ENCODE measurements at regions of chrX and their contacts with region 1.

Region 1: GRCh38 chrX:85379174-85379895 is at the start of gene POF1B:
- DNase-seq: peak; percentile 65 to 74
- H3K4me3 ChIP-seq: peak within 1 kb of the TSS; percentile 68
- H3K4me3 Mint-ChIP-seq: peak within 1 kb of the TSS; percentile 97
- H3K27ac Mint-ChIP-seq: peak within 1 kb of the TSS; percentile 93
- H3K4me1 ChIP-seq: peaks cover 3% of the 10 kb centered on the region; the same call in 1 of the 2 replicates
- H3K4me1 Mint-ChIP-seq: peaks cover 7% of the 10 kb centered on the region
- H3K27me3 ChIP-seq: no peaks in the 10 kb centered on the region
- H3K27me3 Mint-ChIP-seq: no peaks in the 10 kb centered on the region
- CTCF ChIP-seq: no peak
- total RNA-seq, gene POF1B: 28.6 and 31.0 TPM in 2 replicates

Region 2: DNA sequence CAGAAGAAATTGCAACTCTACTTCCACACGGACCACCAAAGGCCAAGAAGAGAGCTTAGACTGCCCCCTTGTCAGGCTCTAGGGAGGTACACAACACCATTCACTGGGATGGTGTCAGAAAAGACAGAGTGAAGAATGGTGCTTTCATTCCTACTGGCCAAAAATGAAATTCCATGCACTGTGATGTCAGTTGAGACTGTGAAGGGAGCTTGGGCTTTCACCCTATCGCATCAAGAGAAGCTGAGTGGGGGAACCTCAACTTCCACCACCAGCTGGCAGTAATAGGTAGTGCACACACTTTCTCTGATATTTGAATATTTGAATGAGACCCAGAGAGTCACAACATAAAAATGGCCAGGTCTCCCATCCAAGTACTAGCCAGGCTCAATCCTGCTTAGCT is 69.6 kb before region 1 on chrX:
- CTCF ChIA-PET with region 1: no interaction called
- POLR2A ChIA-PET with region 1: no interaction called
- intact Hi-C with region 1: no loop called
- DNase-seq: peak in 1 of 2 experiments; percentile 3
- H3K4me3 ChIP-seq: no peak overlapping the region
- H3K4me3 Mint-ChIP-seq: no peak overlapping the region
- H3K27ac Mint-ChIP-seq: no peak overlapping the region
- H3K4me1 ChIP-seq: no peaks in the 10 kb centered on the region
- H3K4me1 Mint-ChIP-seq: no peaks in the 10 kb centered on the region
- H3K27me3 ChIP-seq: no peaks in the 10 kb centered on the region
- H3K27me3 Mint-ChIP-seq: no peaks in the 10 kb centered on the region
- CTCF ChIP-seq: no peak

Region 3: GRCh38 chrX:85358686-85359446 is 20.5 kb before region 1 on chrX:
- CTCF ChIA-PET with region 1: no interaction called
- POLR2A ChIA-PET with region 1: no interaction called
- intact Hi-C with region 1: loop called (anchors 1 kb)
- DNase-seq: peak; percentile 65 to 76
- H3K4me3 ChIP-seq: no peak overlapping the region
- H3K4me3 Mint-ChIP-seq: peak overlapping the region; percentile 28
- H3K27ac Mint-ChIP-seq: peak overlapping the region; percentile 83
- H3K4me1 ChIP-seq: peaks cover 22% of the 10 kb centered on the region
- H3K4me1 Mint-ChIP-seq: peaks cover 26% of the 10 kb centered on the region
- H3K27me3 ChIP-seq: no peaks in the 10 kb centered on the region
- H3K27me3 Mint-ChIP-seq: no peaks in the 10 kb centered on the region
- CTCF ChIP-seq: no peak

Region 4: DNA sequence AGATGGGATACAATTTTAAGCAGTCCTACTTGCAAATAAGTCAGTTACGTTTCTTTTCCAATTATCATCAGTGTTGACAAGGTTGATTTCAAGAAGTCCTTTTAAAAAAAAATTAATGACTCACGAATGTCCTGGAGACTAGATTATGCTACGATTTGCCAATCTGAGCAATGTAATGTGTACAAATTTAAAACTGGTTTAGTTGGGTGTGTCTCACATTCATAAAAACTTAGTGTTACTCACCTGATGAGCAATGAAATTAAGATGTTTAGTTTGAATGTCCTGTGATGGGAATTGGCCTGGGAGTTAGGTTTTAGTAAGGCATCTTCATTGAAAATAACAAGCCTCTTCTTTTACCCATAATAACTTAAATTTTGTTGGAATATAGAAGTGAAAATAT is 136.8 kb after region 1 on chrX:
- CTCF ChIA-PET with region 1: no interaction called
- POLR2A ChIA-PET with region 1: no interaction called
- intact Hi-C with region 1: loop called (anchors 10 kb)
- DNase-seq: no peak
- H3K4me3 ChIP-seq: no peak overlapping the region
- H3K4me3 Mint-ChIP-seq: no peak overlapping the region
- H3K27ac Mint-ChIP-seq: no peak overlapping the region
- H3K4me1 ChIP-seq: peaks cover 16% of the 10 kb centered on the region
- H3K4me1 Mint-ChIP-seq: peaks cover 14% of the 10 kb centered on the region
- H3K27me3 ChIP-seq: no peaks in the 10 kb centered on the region; the same call in 1 of the 2 replicates
- H3K27me3 Mint-ChIP-seq: no peaks in the 10 kb centered on the region
- CTCF ChIP-seq: no peak